ENCODE measurements at regions of chr10 and their contacts with region 1.

Region 1: DNA sequence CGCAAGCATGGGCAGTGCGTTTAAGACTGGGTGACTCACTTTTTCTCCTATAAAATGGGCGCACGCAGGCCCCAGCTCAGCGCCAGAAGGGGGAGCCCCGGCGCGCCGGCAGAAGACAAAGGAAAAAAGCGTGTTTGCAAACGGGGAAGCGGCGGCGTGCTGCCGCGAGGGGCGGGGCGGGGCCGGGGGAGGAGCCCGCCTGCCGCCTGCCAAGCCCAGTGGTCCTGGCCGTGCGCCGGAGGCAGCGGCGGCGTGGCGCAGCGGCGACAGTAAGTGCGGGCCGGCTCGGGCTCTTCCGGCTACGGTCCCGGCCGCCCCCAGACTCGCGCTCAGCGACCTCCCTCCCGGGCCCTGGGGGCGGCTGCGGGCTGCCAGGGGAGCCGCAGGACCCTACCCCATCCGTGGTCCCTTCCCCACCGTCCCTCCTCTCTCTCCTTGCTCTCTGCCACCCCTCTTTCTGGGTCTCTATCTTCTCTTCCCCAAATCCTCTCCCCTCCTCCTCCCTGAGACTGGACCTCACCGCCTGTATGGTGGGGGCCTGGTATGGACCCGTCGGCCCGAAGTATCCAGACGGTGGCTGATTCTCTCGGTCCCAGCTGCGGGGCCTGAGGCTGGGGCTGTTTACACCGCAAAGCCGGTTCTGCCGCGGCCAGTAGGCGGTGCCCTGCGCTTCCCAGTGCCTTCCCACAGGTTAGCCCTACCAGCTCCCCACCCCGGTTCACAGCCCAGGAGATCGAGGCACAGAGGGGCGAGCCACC is at the start of gene SLC29A3:
- DNase-seq: peak; percentile 88
- ATAC-seq: peak; percentile 97
- total RNA-seq, gene SLC29A3: 1.8 TPM

Region 2: GRCh38 chr10:71212318-71213126 is 106.7 kb before region 1 on chr10 and contains the start of gene UNC5B:
- intact Hi-C with region 1: no loop called
- DNase-seq: peak; percentile 94
- ATAC-seq: peak; percentile 92
- total RNA-seq, gene UNC5B: 12.2 TPM

Region 3: DNA sequence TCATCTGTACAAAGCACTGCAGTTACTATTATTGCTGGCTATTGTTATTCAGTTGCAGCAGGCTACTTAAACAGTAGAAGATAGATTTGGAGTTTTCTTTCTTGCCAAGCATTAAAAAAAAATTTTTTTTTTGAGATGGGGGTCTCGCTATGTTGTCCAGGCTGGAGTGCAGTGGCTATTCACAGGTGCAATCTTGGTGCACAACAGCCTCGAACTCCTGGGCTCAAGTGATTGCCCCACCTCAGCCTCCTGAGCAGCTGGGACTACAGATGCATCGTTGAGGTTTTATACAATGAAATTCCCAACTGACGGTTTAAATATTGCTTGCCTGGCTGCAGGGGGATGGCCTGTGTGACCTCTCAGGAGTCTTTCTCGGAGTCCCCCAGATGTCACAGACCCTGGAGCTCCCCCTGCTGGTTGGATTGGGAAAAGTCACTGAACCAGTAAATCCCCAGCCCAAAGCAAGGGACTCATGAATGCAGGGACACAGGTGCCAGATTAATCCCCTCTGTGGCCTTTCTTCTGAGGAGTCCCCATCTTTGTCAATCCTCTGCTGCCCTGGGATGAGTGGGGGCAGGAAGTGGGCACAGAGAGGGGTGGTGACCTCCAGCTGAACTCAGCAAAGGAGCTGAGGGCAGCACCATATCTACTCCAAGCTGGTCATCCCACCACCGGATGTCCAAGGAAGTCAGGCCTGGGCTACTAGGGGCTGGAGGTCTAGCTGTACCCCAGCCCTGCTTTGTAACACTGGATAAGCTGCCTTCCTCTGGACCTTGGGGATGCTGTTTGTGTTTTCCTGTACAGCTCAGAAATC is 250.8 kb after region 1 on chr10:
- intact Hi-C with region 1: loop called (anchors 10 kb)
- DNase-seq: peak; percentile 79
- ATAC-seq: peak; percentile 77

Region 4: GRCh38 chr10:71708301-71708703 is 389.1 kb after region 1 on chr10:
- intact Hi-C with region 1: loop called (anchors 10 kb)
- DNase-seq: peak; percentile 84
- ATAC-seq: peak; percentile 70

Region 5: GRCh38 chr10:71812016-71812912 is 493.0 kb after region 1 on chr10:
- intact Hi-C with region 1: loop called (anchors 5 kb)
- DNase-seq: peak; percentile 83
- ATAC-seq: peak; percentile 85

Region 6: DNA sequence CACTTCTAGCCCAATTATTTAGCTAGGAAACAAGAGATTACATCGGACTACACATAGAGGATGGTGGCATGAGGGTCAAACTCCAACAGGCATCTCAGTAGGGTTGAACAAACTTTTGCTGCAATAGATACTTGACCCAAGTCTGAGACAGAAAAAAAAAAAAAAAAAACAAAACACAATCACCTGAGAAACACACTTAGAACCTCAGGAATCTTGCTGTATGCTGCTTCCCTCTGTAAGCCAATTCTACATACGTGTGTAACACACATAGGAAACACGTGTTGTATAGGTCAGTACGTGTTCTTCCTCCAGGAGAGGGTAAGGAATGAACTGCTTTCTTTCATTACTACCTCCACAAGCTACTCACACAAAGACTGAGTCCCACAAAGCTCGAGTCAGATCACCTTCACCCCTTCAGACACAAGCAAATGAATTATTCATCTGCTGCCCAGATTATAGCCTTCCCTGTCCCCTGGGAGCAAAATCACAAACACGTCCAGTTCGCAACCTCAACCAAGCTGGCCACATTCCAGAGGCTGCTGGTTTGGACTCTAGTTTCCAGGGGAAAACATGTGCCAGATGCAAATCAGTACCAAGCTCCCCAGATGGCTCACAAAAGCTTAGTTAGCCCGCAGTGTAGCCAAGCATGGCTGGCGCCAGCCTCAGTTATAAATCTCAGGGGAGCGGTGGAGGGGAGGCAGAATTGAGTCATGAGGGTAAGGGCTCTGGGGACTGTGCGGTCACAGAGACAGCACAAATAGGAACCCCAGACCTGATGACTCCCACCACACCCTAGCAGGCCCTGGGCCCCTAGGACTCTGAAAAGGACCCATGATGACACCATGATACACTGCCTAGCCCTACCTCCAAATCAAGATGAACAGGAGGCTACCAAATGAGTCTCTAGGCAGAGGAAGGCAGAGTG is 516.7 kb after region 1 on chr10:
- intact Hi-C with region 1: no loop called
- DNase-seq: peak; percentile 81
- ATAC-seq: peak; percentile 36

Region 7: GRCh38 chr10:71893920-71894319 is 574.7 kb after region 1 on chr10:
- intact Hi-C with region 1: loop called (anchors 10 kb)
- DNase-seq: no peak
- ATAC-seq: no peak

Measured in Right ventricle myocardium superior (tissue), 1 donor.